ENCODE measurements at regions of chr7 and their contacts with region 1.

Region 1: GRCh38 chr7:75866489-75867389 is 12.1 kb upstream of the RHBDD2 start:
- DNase-seq: peak in 13 of 14 experiments; percentile 23 to 77 (median 36)
- ATAC-seq: peak; percentile 79
- H3K4me3 ChIP-seq: no peak overlapping the region
- H3K4me3 Mint-ChIP-seq: no peak overlapping the region
- H3K27ac ChIP-seq: no peak overlapping the region
- H3K27ac Mint-ChIP-seq: no peak overlapping the region
- H3K4me1 ChIP-seq: peaks cover 5% of the 10 kb centered on the region
- H3K4me1 Mint-ChIP-seq: no peaks in the 10 kb centered on the region
- H3K27me3 ChIP-seq: no peaks in the 10 kb centered on the region
- H3K27me3 Mint-ChIP-seq: peaks cover 7% of the 10 kb centered on the region
- CTCF ChIP-seq: peak; percentile 71

Region 2: DNA sequence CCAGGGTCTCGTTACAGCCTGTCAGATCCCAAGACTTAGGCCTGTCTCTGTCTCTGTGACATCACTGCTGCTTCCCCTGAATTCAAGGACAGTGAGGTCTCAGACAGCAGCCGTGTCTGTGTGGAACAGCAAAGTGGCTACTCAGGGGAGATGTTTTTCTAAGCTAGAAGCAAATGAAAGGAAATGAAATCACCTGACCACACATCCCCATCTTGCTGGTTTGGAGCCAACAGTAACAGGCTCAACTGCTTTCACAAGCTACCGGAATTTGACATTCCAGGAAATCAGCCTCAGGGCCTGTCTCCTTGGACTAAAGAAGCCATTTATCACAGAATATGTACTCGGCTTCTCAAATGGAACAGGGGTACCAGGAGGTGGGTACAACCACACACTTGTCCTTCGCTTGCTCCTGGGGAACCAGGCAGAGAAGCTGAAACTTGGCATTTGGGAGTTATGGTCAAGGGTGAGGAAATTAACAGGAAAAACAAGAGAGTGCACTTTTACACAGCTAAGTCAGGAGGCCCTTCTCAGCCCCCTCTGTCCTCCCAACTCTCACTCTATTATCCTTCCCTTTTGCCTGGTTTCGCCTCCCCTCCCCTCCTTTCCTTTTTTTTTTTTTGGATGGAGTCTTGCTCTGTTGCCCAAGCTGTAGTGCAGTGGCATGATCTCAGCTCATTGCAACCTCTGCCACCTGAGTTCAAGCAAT is 301.5 kb before region 1 on chr7:
- CTCF ChIA-PET with region 1: no interaction called
- POLR2A ChIA-PET with region 1: no interaction called
- intact Hi-C with region 1: no loop called
- DNase-seq: no peak
- ATAC-seq: no peak
- H3K4me3 ChIP-seq: no peak overlapping the region
- H3K4me3 Mint-ChIP-seq: no peak overlapping the region
- H3K27ac ChIP-seq: no peak overlapping the region
- H3K27ac Mint-ChIP-seq: no peak overlapping the region
- H3K4me1 ChIP-seq: no peaks in the 10 kb centered on the region
- H3K4me1 Mint-ChIP-seq: no peaks in the 10 kb centered on the region
- H3K27me3 ChIP-seq: no peaks in the 10 kb centered on the region
- H3K27me3 Mint-ChIP-seq: no peaks in the 10 kb centered on the region
- CTCF ChIP-seq: no peak

Region 3: DNA sequence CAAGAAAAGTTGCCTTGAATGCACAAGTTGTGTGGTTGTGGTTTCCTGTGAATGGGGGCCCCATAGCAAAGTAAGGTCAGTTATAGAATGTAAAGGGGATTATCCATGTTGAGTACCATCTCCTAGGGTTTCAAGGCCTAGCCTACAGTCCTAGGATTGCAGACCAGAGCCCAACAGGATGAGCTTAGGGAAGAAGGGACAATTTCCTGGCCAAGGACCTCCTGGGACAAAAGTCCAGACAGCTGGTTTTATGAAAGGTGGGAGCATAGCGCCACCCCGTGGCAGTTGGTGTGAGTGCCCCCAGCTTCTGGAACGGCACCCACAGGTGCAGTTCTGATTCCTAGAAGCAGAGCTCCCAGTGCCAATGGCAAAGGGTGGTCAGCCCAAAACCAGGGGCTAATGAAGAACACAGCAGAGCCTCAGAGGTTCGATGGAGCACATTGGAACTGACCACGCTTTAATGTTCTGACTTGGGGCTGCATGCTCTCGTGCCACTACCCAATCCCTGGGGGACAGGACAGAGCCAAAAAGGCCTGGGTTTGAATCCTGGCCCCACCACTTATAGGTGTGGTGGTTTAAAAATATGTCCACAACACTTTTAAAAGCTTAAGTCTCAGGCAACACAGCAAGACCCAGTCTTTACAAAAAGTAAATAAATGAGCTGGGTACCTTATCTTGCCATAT is 153.4 kb after region 1 on chr7:
- CTCF ChIA-PET with region 1: interaction called, 28 read pairs
- POLR2A ChIA-PET with region 1: interaction called, 3 read pairs
- intact Hi-C with region 1: loop called (anchors 1 kb)
- DNase-seq: peak; percentile 42 to 86 (median 66)
- ATAC-seq: peak; percentile 64
- H3K4me3 ChIP-seq: no peak overlapping the region
- H3K4me3 Mint-ChIP-seq: no peak overlapping the region
- H3K27ac ChIP-seq: no peak overlapping the region
- H3K27ac Mint-ChIP-seq: no peak overlapping the region
- H3K4me1 ChIP-seq: peaks cover 11% of the 10 kb centered on the region
- H3K4me1 Mint-ChIP-seq: peaks cover 6% of the 10 kb centered on the region
- H3K27me3 ChIP-seq: no peaks in the 10 kb centered on the region
- H3K27me3 Mint-ChIP-seq: no peaks in the 10 kb centered on the region
- CTCF ChIP-seq: peak; percentile 88

Region 4: GRCh38 chr7:76133164-76133775 is 266.5 kb after region 1 on chr7:
- CTCF ChIA-PET with region 1: no interaction called
- POLR2A ChIA-PET with region 1: no interaction called
- intact Hi-C with region 1: loop called in 1 of 2 experiments (anchors 5 kb)
- DNase-seq: peak in 2 of 14 experiments; percentile 16 to 27
- ATAC-seq: peak; percentile 71
- H3K4me3 ChIP-seq: peak overlapping the region; percentile 7
- H3K4me3 Mint-ChIP-seq: peak overlapping the region; percentile 63
- H3K27ac ChIP-seq: no peak overlapping the region
- H3K27ac Mint-ChIP-seq: peak overlapping the region; percentile 90
- H3K4me1 ChIP-seq: peaks cover 2% of the 10 kb centered on the region
- H3K4me1 Mint-ChIP-seq: peaks cover 48% of the 10 kb centered on the region
- H3K27me3 ChIP-seq: no peaks in the 10 kb centered on the region
- H3K27me3 Mint-ChIP-seq: no peaks in the 10 kb centered on the region
- CTCF ChIP-seq: no peak

Region 5: GRCh38 chr7:76262683-76263402 is 396.1 kb after region 1 on chr7:
- CTCF ChIA-PET with region 1: no interaction called
- POLR2A ChIA-PET with region 1: no interaction called
- intact Hi-C with region 1: loop called (anchors 5 kb)
- DNase-seq: peak in 4 of 14 experiments; percentile 36 to 60 (median 48)
- ATAC-seq: peak; percentile 30
- H3K4me3 ChIP-seq: no peak overlapping the region
- H3K4me3 Mint-ChIP-seq: no peak overlapping the region
- H3K27ac ChIP-seq: no peak overlapping the region
- H3K27ac Mint-ChIP-seq: no peak overlapping the region
- H3K4me1 ChIP-seq: peaks cover 12% of the 10 kb centered on the region
- H3K4me1 Mint-ChIP-seq: peaks cover 1% of the 10 kb centered on the region
- H3K27me3 ChIP-seq: peaks cover 27 to 36% of the 10 kb centered on the region in 2 experiments
- H3K27me3 Mint-ChIP-seq: peaks cover 58% of the 10 kb centered on the region
- CTCF ChIP-seq: peak; percentile 47

Measured in CD4-positive, alpha-beta T cell (primary cell).